HCT116 (cell line): ENCODE measurements at regions of chr4 and their contacts with region 1.

Region 1: DNA sequence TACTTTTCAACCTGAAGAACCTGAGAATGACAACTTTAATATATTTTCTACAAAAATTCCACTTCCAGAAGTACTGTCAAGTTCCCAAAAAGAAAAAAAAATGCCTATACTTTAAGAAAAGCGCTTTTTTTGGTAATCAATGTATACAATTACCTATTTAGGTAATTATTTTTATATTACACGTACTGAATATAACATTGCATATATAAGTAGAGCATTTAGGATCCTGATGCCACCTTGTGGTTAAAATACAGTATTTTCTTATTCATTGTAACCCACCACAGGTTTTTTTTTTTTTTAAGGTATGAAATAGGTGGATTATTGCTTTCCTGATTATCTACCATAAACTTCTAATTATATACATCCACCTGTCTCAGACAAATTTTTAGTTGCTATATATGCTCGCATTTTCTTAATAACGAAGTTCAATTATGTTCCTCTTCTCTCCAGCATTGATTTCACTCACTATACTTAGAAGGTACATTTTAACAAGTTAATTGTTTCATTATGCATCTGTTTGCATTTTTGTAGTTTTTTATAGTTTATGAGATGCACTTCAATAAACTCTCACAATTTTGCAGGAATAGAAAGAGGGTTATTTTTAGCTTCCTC is 5.2 kb downstream of the MAP9 start:
- DNase-seq: peak; percentile 16
- ATAC-seq: peak; percentile 70; the same call in 1 of the 2 replicates
- H3K4me3 ChIP-seq: no peak overlapping the region
- H3K27ac ChIP-seq: no peak overlapping the region
- H3K4me1 ChIP-seq: no peaks in the 10 kb centered on the region
- H3K27me3 ChIP-seq: no peaks in the 10 kb centered on the region
- CTCF ChIP-seq: peak; percentile 17 to 58 (median 57); a peak in 3 of 6 replicates
- POLR2A ChIP-seq: no peak
- RAD21 ChIP-seq: peak; percentile 54

Region 2: DNA sequence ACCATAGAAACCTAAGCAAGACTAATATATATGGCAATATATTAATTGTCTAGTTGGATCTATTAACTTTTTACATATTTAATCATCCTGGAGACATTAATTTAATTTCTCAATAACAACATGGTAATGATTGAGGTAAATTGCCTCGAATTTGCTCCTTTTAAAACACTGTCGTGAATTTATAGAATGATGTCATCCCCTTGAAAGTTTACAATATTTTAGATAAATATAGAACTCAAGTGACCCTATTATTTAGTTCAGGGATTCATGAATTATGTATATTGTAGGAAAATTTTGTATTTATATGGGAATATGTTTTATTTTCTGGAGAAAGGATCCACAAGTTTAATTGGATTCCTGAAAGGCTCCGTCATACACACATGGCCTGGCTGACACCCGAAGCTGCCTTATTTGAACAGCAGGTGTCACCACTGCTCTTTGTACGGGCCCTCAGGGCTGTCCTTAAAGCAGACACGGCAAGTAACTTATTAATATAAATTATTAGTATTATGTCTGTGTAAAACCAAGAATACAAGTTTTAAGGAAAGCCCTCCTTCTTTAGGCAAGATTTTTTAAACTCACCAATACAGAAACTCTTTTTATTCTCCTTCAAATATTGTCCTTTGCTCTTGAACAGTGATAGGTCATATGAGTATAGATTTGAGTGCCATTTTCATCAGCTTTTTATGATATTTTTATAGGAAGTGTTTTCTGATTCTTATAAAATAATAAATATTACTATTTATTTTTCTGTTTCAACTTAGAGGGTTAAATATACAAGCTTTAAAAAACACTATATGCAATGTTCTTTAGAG is 819.5 kb before region 1 on chr4:
- CTCF ChIA-PET with region 1: no interaction called
- POLR2A ChIA-PET with region 1: no interaction called
- RAD21 ChIA-PET with region 1: no interaction called
- intact Hi-C with region 1: loop called (anchors 5 kb)
- DNase-seq: peak; percentile 79
- ATAC-seq: peak; percentile 66
- H3K4me3 ChIP-seq: no peak overlapping the region
- H3K27ac ChIP-seq: no peak overlapping the region
- H3K4me1 ChIP-seq: peaks cover 2 to 12% of the 10 kb centered on the region in 2 experiments; a peak in 3 of 4 replicates
- H3K27me3 ChIP-seq: no peaks in the 10 kb centered on the region
- CTCF ChIP-seq: peak; percentile 68 to 83 (median 83)
- POLR2A ChIP-seq: no peak
- RAD21 ChIP-seq: peak; percentile 86

Region 3: GRCh38 chr4:154854362-154854761 is 517.2 kb before region 1 on chr4:
- CTCF ChIA-PET with region 1: no interaction called
- POLR2A ChIA-PET with region 1: no interaction called
- RAD21 ChIA-PET with region 1: no interaction called
- intact Hi-C with region 1: loop called (anchors 2 kb)
- DNase-seq: peak; percentile 16
- ATAC-seq: peak; percentile 82
- H3K4me3 ChIP-seq: no peak overlapping the region
- H3K27ac ChIP-seq: no peak overlapping the region
- H3K4me1 ChIP-seq: no peaks in the 10 kb centered on the region
- H3K27me3 ChIP-seq: no peaks in the 10 kb centered on the region
- CTCF ChIP-seq: peak; percentile 32 to 51 (median 46); a peak in 5 of 6 replicates
- POLR2A ChIP-seq: no peak
- RAD21 ChIP-seq: peak; percentile 58

Region 4: GRCh38 chr4:155025762-155026457 is 345.6 kb before region 1 on chr4:
- CTCF ChIA-PET with region 1: interaction called, 5 read pairs
- POLR2A ChIA-PET with region 1: no interaction called
- RAD21 ChIA-PET with region 1: no interaction called
- intact Hi-C with region 1: loop called (anchors 1 kb)
- DNase-seq: peak; percentile 65
- ATAC-seq: peak; percentile 99
- H3K4me3 ChIP-seq: no peak overlapping the region
- H3K27ac ChIP-seq: no peak overlapping the region
- H3K4me1 ChIP-seq: no peaks in the 10 kb centered on the region
- H3K27me3 ChIP-seq: no peaks in the 10 kb centered on the region
- CTCF ChIP-seq: peak; percentile 75 to 93 (median 82)
- POLR2A ChIP-seq: no peak
- RAD21 ChIP-seq: peak; percentile 73

Region 5: GRCh38 chr4:155687380-155687982 is 315.9 kb after region 1 on chr4:
- CTCF ChIA-PET with region 1: no interaction called
- POLR2A ChIA-PET with region 1: no interaction called
- RAD21 ChIA-PET with region 1: no interaction called
- intact Hi-C with region 1: no loop called
- DNase-seq: no peak
- ATAC-seq: no peak
- H3K4me3 ChIP-seq: no peak overlapping the region
- H3K27ac ChIP-seq: no peak overlapping the region
- H3K4me1 ChIP-seq: no peaks in the 10 kb centered on the region
- H3K27me3 ChIP-seq: no peaks in the 10 kb centered on the region
- CTCF ChIP-seq: no peak
- POLR2A ChIP-seq: no peak
- RAD21 ChIP-seq: no peak